B cell (primary cell): ENCODE measurements at regions of chr2 and their contacts with region 1.

Region 1: GRCh38 chr2:147910990-147911473 is 66.2 kb downstream of the ACVR2A start:
- DNase-seq: peak; percentile 63
- ATAC-seq: no peak
- H3K4me3 ChIP-seq: no peak overlapping the region
- H3K4me3 Mint-ChIP-seq: no peak overlapping the region
- H3K27ac ChIP-seq: no peak overlapping the region
- H3K27ac Mint-ChIP-seq: no peak overlapping the region
- H3K4me1 ChIP-seq: no peaks in the 10 kb centered on the region
- H3K4me1 Mint-ChIP-seq: no peaks in the 10 kb centered on the region
- H3K27me3 ChIP-seq: no peaks in the 10 kb centered on the region
- H3K27me3 Mint-ChIP-seq: no peaks in the 10 kb centered on the region
- CTCF ChIP-seq: peak; percentile 96

Region 2: DNA sequence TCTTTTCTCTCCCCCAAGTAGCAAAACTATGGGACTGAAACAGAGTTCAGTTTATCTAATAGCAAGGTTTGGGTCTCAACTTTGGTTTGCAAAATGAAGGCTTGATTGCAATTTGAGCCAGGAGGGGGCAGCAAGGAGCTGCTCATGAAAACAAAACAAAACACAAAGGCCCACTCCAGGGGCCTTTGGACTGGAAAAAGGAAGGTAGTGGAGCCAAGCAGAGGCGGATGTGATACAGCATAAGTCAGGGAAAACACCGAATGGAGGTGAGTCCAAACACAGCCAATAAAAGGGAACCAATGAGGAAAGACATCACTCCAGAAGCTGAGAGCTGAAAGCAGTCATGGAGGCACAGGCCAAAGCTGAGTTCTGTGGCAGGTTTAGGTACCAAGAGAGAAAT is 865.9 kb before region 1 on chr2:
- CTCF ChIA-PET with region 1: interaction called, 110 read pairs
- POLR2A ChIA-PET with region 1: no interaction called
- intact Hi-C with region 1: loop called (anchors 1 kb)
- DNase-seq: peak; percentile 18
- ATAC-seq: no peak
- H3K4me3 ChIP-seq: no peak overlapping the region
- H3K4me3 Mint-ChIP-seq: no peak overlapping the region
- H3K27ac ChIP-seq: no peak overlapping the region
- H3K27ac Mint-ChIP-seq: no peak overlapping the region
- H3K4me1 ChIP-seq: no peaks in the 10 kb centered on the region
- H3K4me1 Mint-ChIP-seq: no peaks in the 10 kb centered on the region
- H3K27me3 ChIP-seq: no peaks in the 10 kb centered on the region
- H3K27me3 Mint-ChIP-seq: peaks cover 5% of the 10 kb centered on the region
- CTCF ChIP-seq: peak; percentile 56

Region 3: DNA sequence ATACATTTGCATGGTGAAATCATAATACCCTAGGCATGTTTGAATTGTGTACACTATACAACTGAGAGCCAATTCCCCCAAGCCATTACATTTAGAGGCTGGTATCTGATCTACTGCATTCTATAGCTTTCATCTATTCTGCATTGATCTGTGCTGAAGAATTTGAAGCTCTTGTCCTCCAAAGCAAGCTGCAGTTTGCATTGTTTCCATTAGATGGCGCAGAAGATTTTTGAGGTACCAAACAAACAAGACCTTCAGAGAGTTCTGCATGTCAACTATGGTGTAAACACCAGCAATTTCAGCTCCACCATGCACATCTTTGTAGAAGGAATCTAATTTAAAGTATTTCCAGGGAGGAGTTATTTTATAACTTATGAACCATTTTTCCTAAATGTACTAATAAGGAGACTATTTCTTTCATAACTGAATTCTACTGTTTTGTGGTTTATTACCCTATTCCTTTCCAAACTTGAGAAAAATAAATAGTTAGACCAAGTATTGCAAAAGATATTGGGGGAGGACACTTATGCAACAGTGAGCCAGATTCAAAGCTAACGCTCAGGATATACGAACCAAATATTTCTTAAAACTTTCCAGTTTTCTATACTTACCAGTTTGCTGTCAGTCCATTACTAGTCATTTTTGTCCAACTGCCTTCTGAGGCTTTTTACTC is 828.0 kb before region 1 on chr2:
- CTCF ChIA-PET with region 1: interaction called, 150 read pairs
- POLR2A ChIA-PET with region 1: no interaction called
- intact Hi-C with region 1: no loop called
- DNase-seq: peak; percentile 45
- ATAC-seq: no peak
- H3K4me3 ChIP-seq: no peak overlapping the region
- H3K4me3 Mint-ChIP-seq: no peak overlapping the region
- H3K27ac ChIP-seq: no peak overlapping the region
- H3K27ac Mint-ChIP-seq: no peak overlapping the region
- H3K4me1 ChIP-seq: no peaks in the 10 kb centered on the region
- H3K4me1 Mint-ChIP-seq: no peaks in the 10 kb centered on the region
- H3K27me3 ChIP-seq: no peaks in the 10 kb centered on the region
- H3K27me3 Mint-ChIP-seq: no peaks in the 10 kb centered on the region
- CTCF ChIP-seq: peak; percentile 78

Region 4: GRCh38 chr2:147923846-147924245 is 12.8 kb after region 1 on chr2:
- CTCF ChIA-PET with region 1: interaction called, 16 read pairs
- POLR2A ChIA-PET with region 1: no interaction called
- intact Hi-C with region 1: no loop called
- DNase-seq: no peak
- ATAC-seq: no peak
- H3K4me3 ChIP-seq: no peak overlapping the region
- H3K4me3 Mint-ChIP-seq: no peak overlapping the region
- H3K27ac ChIP-seq: no peak overlapping the region
- H3K27ac Mint-ChIP-seq: no peak overlapping the region
- H3K4me1 ChIP-seq: no peaks in the 10 kb centered on the region
- H3K4me1 Mint-ChIP-seq: no peaks in the 10 kb centered on the region
- H3K27me3 ChIP-seq: no peaks in the 10 kb centered on the region
- H3K27me3 Mint-ChIP-seq: no peaks in the 10 kb centered on the region
- CTCF ChIP-seq: no peak

Region 5: GRCh38 chr2:148102641-148103040 is 191.6 kb after region 1 on chr2:
- CTCF ChIA-PET with region 1: no interaction called
- POLR2A ChIA-PET with region 1: no interaction called
- intact Hi-C with region 1: no loop called
- DNase-seq: no peak
- ATAC-seq: no peak
- H3K4me3 ChIP-seq: no peak overlapping the region
- H3K4me3 Mint-ChIP-seq: no peak overlapping the region
- H3K27ac ChIP-seq: no peak overlapping the region
- H3K27ac Mint-ChIP-seq: no peak overlapping the region
- H3K4me1 ChIP-seq: no peaks in the 10 kb centered on the region
- H3K4me1 Mint-ChIP-seq: no peaks in the 10 kb centered on the region
- H3K27me3 ChIP-seq: no peaks in the 10 kb centered on the region
- H3K27me3 Mint-ChIP-seq: no peaks in the 10 kb centered on the region
- CTCF ChIP-seq: no peak